Posterior vena cava (tissue), 2 donors: ENCODE measurements at regions of chr3 and their contacts with region 1.

Region 1: DNA sequence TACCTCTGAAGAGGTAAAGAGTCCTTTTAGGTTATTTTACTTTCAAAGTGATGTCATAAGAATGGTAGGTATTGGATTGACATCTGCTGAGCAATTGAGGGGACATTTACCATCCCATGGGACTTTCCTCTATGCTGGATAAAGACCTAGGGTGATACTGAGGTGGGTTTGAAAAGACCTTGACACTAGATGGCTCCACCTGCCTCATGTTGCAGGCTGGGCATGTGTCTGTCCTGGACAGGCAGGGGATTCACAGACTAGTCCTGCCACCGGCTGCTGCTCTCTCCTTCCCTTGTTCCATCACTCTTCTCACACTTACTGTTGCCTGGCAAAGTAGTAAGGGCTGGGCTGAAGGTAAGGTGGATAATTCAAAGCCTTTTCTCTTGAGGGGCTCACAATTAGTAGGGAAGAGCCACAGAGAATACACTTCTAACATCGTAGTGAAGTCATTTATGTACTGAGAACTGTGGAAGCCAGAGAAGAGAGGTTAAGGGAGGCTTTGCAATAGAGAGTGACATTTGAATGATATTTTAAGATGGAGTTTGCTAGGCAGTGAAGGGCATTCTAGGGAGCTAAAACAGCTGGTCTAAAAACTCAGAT is 27.7 kb downstream of the TRAK1 start:
- DNase-seq: no peak

Region 2: DNA sequence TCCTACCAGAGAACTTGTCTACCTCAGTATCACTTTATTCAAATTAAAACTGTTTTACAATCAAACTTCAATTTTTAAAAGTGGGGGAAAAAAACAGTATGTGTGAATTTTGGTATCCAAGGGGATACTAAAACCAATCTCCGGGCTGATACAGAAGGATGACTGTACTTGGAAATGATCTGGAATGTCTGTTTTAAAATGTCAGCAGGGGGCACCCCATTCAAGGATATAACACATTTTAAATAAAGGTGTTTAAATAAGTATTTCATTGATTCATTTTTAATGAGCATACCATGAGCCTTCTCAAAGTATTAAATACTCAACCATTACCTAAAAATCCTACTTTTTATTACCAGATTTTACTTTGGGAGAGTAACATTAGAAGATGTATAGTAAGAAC is 224.9 kb before region 1 on chr3:
- intact Hi-C with region 1: loop called in 1 of 2 experiments (anchors 10 kb)
- DNase-seq: no peak

Region 3: DNA sequence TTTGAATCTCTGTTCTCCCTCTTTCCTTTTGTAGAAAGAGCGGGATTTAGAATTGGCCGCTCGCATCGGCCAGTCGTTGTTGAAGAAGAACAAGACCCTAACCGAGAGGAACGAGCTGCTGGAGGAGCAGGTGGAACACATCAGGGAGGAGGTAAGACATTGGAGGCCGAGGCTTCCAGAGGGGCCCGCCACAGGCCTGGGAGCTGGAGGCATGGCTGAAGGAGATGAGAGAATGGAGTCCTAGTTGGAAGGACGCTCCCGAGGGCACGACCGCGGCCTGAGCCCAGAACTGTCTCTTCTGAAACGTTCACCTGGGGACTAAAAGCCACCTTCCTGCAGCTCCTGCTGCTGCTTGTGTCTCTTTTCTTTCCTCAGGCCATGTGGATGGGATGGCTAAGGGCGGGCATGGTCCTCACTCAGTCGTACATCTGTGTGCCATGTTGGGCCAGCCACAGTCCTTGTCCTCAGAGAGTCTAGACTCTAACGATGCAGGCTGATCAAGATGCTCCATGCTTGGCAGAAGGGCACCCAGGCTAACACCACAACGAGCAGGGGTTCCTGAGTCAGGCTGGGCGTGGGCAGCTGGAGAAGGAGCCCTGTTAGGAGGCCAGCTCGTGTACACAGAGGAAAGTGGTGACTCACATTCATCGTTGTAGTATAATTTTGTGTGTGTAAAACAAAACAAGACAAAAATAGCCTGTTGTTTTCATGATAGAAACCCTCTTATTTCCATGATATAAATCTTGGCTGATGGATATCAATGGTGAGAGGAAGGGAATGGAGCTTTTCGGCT is 66.0 kb after region 1 on chr3:
- intact Hi-C with region 1: loop called in 1 of 2 experiments (anchors 5 kb)
- DNase-seq: no peak